Uterus (tissue), 4 donors: ENCODE measurements at regions of chr1 and their contacts with region 1.

Region 1: DNA sequence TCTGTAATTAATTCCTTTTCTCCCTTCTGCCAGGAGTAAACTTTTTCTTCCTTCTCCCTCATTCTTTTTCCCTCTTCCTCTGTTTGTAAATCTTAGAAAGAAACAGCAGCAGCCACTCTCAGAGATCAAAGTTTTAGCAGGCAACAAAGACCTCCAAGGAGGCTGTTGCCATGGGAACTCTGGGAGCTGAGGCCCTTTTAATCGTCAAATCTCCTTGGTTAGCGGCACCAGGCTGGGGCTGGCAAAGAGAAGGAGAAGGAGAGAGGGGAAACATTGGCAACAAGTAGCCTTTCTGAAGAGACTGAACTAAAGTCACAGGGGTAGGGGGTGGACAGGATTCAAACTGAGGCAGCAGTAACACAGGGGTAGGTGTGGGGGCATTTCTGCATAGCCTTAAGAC is 25.2 kb downstream of the ILDR2 start:
- DNase-seq: no peak
- H3K4me3 ChIP-seq: no peak overlapping the region
- H3K27ac ChIP-seq: no peak overlapping the region
- H3K4me1 ChIP-seq: no peaks in the 10 kb centered on the region
- H3K27me3 ChIP-seq: no peaks in the 10 kb centered on the region
- CTCF ChIP-seq: no peak
- POLR2A ChIP-seq: no peak

Region 2: DNA sequence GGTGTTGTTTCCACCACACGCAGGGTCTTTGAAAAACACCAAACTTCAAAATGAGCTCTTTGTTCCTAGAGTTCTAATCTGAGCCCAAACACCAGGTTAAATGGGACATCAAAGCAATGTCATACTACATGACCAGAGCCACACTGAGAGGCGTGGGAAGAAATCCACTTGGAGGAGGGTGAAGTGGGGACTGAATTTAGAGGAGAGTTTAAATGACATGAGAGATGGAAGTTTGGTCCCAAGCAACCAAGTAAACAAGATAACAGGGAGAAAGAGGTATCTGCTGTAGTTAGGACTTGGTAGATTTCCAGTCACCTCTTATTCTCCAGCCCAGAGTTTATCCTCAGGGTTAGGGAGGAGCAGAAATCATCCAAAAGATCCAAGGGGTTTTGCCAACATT is 492.5 kb before region 1 on chr1:
- intact Hi-C with region 1: no loop called
- DNase-seq: no peak
- H3K4me3 ChIP-seq: no peak overlapping the region
- H3K27ac ChIP-seq: no peak overlapping the region
- H3K4me1 ChIP-seq: no peaks in the 10 kb centered on the region
- H3K27me3 ChIP-seq: no peaks in the 10 kb centered on the region
- CTCF ChIP-seq: no peak
- POLR2A ChIP-seq: no peak

Region 3: GRCh38 chr1:166900987-166901386 is 49.2 kb before region 1 on chr1:
- intact Hi-C with region 1: no loop called
- DNase-seq: no peak
- H3K4me3 ChIP-seq: no peak overlapping the region
- H3K27ac ChIP-seq: no peak overlapping the region
- H3K4me1 ChIP-seq: no peaks in the 10 kb centered on the region
- H3K27me3 ChIP-seq: no peaks in the 10 kb centered on the region
- CTCF ChIP-seq: no peak
- POLR2A ChIP-seq: no peak

Region 4: DNA sequence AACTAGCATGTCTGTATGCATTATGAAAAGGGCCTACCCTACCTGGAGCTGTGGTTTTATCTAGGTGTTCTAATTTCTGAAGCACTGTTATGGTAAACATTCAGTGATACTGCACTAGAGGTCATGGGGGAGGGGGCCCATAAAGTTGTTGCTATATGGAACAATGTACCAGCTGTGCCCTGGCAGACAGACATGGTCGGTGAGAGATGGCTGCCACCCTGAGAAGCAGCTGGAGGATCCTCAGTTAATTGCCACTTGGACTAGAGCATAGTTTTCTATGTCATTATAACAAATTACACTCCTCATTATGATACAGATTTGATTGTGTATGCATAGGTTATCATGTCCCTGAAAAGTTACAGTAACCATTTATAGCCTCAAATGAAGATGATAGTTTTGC is 20.2 kb before region 1 on chr1:
- intact Hi-C with region 1: loop called (anchors 1 kb)
- DNase-seq: no peak
- H3K4me3 ChIP-seq: no peak overlapping the region
- H3K27ac ChIP-seq: no peak overlapping the region
- H3K4me1 ChIP-seq: no peaks in the 10 kb centered on the region
- H3K27me3 ChIP-seq: no peaks in the 10 kb centered on the region
- CTCF ChIP-seq: no peak
- POLR2A ChIP-seq: no peak